GM12878 (cell line): ENCODE measurements at regions of chr7 and their contacts with region 1.

Region 1: DNA sequence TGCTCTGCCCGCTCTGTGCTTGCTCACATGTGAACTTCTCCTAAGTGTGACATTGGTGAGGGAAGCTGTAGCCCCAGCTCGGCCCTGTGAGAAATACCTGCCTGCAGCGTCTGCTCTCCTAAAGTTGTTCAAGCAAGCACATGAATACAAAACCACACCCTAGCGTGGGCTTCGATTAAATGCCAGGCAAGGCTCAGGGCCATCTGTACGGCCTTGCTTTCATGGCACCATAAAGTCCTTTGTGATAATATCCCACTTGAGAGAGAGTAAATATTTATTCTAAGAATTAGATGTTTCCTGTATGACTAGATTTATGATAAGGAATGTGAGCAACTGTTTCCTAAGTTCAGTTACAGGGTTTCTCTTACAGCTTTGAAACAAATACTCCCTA is 262.8 kb upstream of the KLF14 start:
- DNase-seq: no peak
- ATAC-seq: peak; percentile 45
- H3K4me3 ChIP-seq: no peak overlapping the region
- H3K27ac ChIP-seq: no peak overlapping the region
- H3K4me1 ChIP-seq: peaks cover 18% of the 10 kb centered on the region
- H3K27me3 ChIP-seq: no peaks in the 10 kb centered on the region
- CTCF ChIP-seq: no peak
- EP300 ChIP-seq: no peak
- POLR2A ChIP-seq: no peak; the same call in 1 of the 2 replicates
- RAD21 ChIP-seq: no peak

Region 2: GRCh38 chr7:131027287-131027773 is 30.5 kb after region 1 on chr7:
- CTCF ChIA-PET with region 1: interaction called, 7 read pairs
- POLR2A ChIA-PET with region 1: no interaction called
- RAD21 ChIA-PET with region 1: interaction called, 3 read pairs
- SMC1A ChIA-PET with region 1: interaction called, 5 read pairs
- in situ Hi-C with region 1: no loop called
- intact Hi-C with region 1: loop called (anchors 1 kb)
- DNase-seq: no peak
- ATAC-seq: peak; percentile 46
- H3K4me3 ChIP-seq: no peak overlapping the region
- H3K27ac ChIP-seq: peak overlapping the region; percentile 61
- H3K4me1 ChIP-seq: peaks cover 53% of the 10 kb centered on the region
- H3K27me3 ChIP-seq: no peaks in the 10 kb centered on the region
- CTCF ChIP-seq: no peak
- EP300 ChIP-seq: no peak
- POLR2A ChIP-seq: peak; percentile 38; the same call in 1 of the 2 replicates
- RAD21 ChIP-seq: 0 out of 2 replicates have a peak, but pooled peaks have one; percentile 22